Activated B cell treated with CpG ODN at 0.5 μM for 24 hours (primary cell): ENCODE measurements at regions of chr4 and their contacts with region 1.

Region 1: DNA sequence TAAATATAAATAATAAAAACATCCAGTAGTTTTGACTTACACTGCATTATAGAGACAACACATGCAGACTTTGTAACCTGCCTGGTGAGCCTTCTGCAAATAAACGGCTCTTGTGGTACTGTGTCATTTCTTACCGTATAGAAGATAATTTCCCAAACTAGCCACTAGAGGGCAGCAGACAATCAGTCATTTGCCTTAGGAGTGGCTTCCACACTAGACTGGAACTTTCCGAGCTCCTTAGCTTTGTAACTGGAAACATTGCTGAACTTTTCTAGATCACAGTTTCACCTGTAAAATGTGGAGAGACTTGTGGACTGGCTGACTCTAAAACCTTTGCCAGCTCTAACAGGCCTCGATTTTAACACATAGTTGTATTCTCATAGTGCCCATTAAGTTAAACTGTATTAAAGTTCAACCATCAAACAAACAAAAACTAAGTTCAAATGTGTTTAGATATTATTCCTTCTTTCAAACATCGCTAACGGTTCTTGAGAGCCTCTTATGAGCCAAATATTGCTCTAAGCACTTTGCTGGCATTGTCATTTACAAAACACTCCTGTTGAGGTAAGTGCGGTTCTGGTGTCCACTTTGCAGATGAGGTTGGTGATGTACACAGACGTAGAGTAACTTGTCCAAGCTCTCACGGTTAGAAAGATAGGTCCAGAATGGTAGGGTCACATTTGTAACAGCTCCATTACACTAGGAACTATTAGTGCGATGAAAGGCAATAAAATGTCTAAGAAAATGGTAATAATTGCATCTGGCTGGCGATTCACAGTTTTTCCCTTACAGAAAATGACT is 345.5 kb downstream of the ANK2 start:
- DNase-seq: no peak
- ATAC-seq: peak; percentile 89
- H3K4me3 Mint-ChIP-seq: no peak overlapping the region
- H3K27ac Mint-ChIP-seq: no peak overlapping the region
- H3K4me1 Mint-ChIP-seq: no peaks in the 10 kb centered on the region
- H3K27me3 Mint-ChIP-seq: peaks cover 2% of the 10 kb centered on the region
- CTCF ChIP-seq: peak; percentile 24

Region 2: GRCh38 chr4:113278324-113278934 is 116.5 kb before region 1 on chr4:
- CTCF ChIA-PET with region 1: no interaction called
- POLR2A ChIA-PET with region 1: no interaction called
- intact Hi-C with region 1: loop called (anchors 2 kb)
- DNase-seq: no peak
- ATAC-seq: peak; percentile 72
- H3K4me3 Mint-ChIP-seq: no peak overlapping the region
- H3K27ac Mint-ChIP-seq: no peak overlapping the region
- H3K4me1 Mint-ChIP-seq: no peaks in the 10 kb centered on the region
- H3K27me3 Mint-ChIP-seq: no peaks in the 10 kb centered on the region
- CTCF ChIP-seq: no peak

Region 3: GRCh38 chr4:113893546-113893945 is 498.6 kb after region 1 on chr4:
- CTCF ChIA-PET with region 1: interaction called, 5 read pairs
- POLR2A ChIA-PET with region 1: no interaction called
- intact Hi-C with region 1: loop called (anchors 1 kb)
- DNase-seq: no peak
- ATAC-seq: no peak
- H3K4me3 Mint-ChIP-seq: no peak overlapping the region
- H3K27ac Mint-ChIP-seq: no peak overlapping the region
- H3K4me1 Mint-ChIP-seq: no peaks in the 10 kb centered on the region
- H3K27me3 Mint-ChIP-seq: peaks cover 1% of the 10 kb centered on the region
- CTCF ChIP-seq: no peak

Region 4: GRCh38 chr4:113952452-113953029 is 557.6 kb after region 1 on chr4:
- CTCF ChIA-PET with region 1: interaction called, 5 read pairs
- POLR2A ChIA-PET with region 1: no interaction called
- intact Hi-C with region 1: loop called (anchors 1 kb)
- DNase-seq: no peak
- ATAC-seq: peak; percentile 71
- H3K4me3 Mint-ChIP-seq: no peak overlapping the region
- H3K27ac Mint-ChIP-seq: no peak overlapping the region
- H3K4me1 Mint-ChIP-seq: peaks cover 2% of the 10 kb centered on the region
- H3K27me3 Mint-ChIP-seq: peaks cover 16% of the 10 kb centered on the region
- CTCF ChIP-seq: peak; percentile 55

Region 5: DNA sequence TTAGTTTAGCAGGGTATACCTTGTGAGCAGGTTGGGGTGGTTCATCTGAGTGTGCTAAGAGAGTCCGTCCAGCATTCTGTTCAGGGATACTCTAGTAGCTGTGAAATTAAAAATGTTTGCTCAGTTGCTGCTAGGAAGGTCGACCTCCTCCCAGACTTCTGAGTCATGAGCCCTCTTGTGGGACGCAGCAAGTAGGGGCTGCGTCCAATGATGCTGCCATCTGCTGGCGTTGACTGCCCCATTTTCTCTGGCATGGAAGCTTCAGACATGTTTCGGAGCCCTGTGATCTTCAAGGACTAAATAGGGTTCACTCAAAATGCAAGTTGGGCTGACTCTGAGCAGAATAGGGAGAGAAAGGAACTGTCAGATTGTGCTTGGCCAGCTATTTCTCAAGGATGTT is 785.6 kb after region 1 on chr4:
- CTCF ChIA-PET with region 1: interaction called, 14 read pairs
- POLR2A ChIA-PET with region 1: no interaction called
- intact Hi-C with region 1: loop called (anchors 1 kb)
- DNase-seq: no peak
- ATAC-seq: no peak
- H3K4me3 Mint-ChIP-seq: no peak overlapping the region
- H3K27ac Mint-ChIP-seq: no peak overlapping the region
- H3K4me1 Mint-ChIP-seq: no peaks in the 10 kb centered on the region
- H3K27me3 Mint-ChIP-seq: no peaks in the 10 kb centered on the region
- CTCF ChIP-seq: no peak

Region 6: GRCh38 chr4:114659386-114660008 is 1264.6 kb after region 1 on chr4:
- CTCF ChIA-PET with region 1: no interaction called
- POLR2A ChIA-PET with region 1: no interaction called
- intact Hi-C with region 1: loop called (anchors 2 kb)
- DNase-seq: no peak
- ATAC-seq: peak; percentile 92
- H3K4me3 Mint-ChIP-seq: no peak overlapping the region
- H3K27ac Mint-ChIP-seq: peak overlapping the region; percentile 46
- H3K4me1 Mint-ChIP-seq: peaks cover 14% of the 10 kb centered on the region
- H3K27me3 Mint-ChIP-seq: no peaks in the 10 kb centered on the region
- CTCF ChIP-seq: no peak

Region 7: DNA sequence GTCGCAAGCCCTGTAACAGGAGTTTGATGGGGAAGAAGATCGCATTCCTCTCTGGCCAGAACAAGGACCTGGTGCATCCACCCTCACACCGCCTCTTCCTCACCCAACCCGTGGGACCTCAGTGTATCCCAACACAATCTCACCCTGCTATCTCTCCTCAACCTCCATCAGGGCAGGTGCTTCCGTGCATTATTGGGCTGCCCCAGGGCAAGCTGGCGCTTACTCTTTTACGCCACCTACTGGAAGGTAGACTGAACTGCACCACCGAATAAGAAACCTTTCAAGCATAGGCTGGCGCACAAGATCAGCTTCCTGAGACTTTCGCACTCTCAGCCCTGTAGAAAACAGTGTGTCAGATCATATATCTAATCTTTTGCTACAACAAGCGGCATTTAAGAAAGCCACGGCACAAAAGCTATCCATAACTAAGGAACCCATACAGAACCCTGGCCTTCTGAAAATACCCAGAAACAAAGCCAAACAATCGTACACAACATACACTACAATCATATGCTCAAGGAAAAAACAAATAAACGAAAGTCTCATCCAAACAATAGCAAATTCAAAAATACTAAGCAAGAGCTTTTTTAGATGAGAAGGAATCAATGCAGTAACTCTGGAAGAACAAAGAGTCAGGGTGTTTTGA is 1413.0 kb after region 1 on chr4:
- CTCF ChIA-PET with region 1: no interaction called
- POLR2A ChIA-PET with region 1: no interaction called
- intact Hi-C with region 1: loop called (anchors 10 kb)
- DNase-seq: peak; percentile 15
- ATAC-seq: peak; percentile 87
- H3K4me3 Mint-ChIP-seq: no peak overlapping the region
- H3K27ac Mint-ChIP-seq: no peak overlapping the region
- H3K4me1 Mint-ChIP-seq: no peaks in the 10 kb centered on the region
- H3K27me3 Mint-ChIP-seq: no peaks in the 10 kb centered on the region
- CTCF ChIP-seq: no peak